ENCODE measurements at regions of chr5 and their contacts with region 1.

Region 1: GRCh38 chr5:168219515-168220410 is 71.7 kb upstream of the WWC1 start:
- DNase-seq: peak; percentile 51
- H3K4me3 ChIP-seq: no peak overlapping the region
- H3K27ac ChIP-seq: no peak overlapping the region
- H3K4me1 ChIP-seq: peaks cover 0 to 11% (median 1%) of the 10 kb centered on the region in 4 donors
- H3K27me3 ChIP-seq: peaks cover 7% of the 10 kb centered on the region
- CTCF ChIP-seq: peak; percentile 85 to 95 (median 87)
- EP300 ChIP-seq: no peak
- POLR2A ChIP-seq: no peak

Region 2: GRCh38 chr5:167723254-167723871 is 496.4 kb before region 1 on chr5:
- in situ Hi-C with region 1: loop called (anchors 10 to 25 kb)
- intact Hi-C with region 1: loop called (anchors 10 kb)
- DNase-seq: peak; percentile 68
- H3K4me3 ChIP-seq: no peak overlapping the region
- H3K27ac ChIP-seq: no peak overlapping the region
- H3K4me1 ChIP-seq: no peaks in the 10 kb centered on the region
- H3K27me3 ChIP-seq: no peaks in the 10 kb centered on the region
- CTCF ChIP-seq: peak; percentile 81 to 93 (median 90)
- EP300 ChIP-seq: no peak
- POLR2A ChIP-seq: no peak

Region 3: DNA sequence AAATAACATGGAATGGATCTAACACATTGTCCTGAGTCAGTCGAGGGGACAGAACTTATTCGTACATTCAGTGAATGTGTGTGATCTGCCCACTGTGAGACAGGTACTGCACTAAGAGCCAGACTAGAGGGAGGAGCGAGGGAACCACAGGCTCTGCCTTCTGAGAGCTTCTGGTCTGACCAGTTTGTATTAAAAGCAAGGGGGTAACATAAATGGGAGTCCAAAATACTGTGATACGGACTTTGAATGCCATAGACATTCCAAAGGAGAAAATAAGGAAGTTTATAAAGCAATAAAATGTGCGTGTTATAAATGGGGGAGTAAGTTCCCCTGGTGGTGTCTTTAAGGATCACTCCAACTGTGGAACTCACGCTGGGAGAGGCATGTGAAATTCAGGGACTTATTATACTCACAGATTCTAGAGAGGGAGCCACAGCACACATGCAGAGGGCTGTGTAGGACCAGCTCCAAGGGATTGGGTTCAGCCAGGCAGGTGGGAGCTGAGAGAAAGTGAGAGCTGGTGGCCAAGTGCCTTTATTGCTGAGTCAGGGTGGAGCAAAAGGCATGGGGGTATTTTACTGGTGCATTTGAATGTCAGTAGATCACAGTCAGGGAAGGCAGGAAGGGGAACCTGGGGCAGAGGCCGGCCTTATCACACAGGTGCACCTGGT is 114.8 kb before region 1 on chr5:
- in situ Hi-C with region 1: loop called in 2 of 4 experiments (anchors 10 kb)
- intact Hi-C with region 1: no loop called
- DNase-seq: peak; percentile 60
- H3K4me3 ChIP-seq: peak overlapping the region in 1 of 4 donors; percentile 10
- H3K27ac ChIP-seq: peak overlapping the region; percentile 70 to 77 (median 75)
- H3K4me1 ChIP-seq: peaks cover 0 to 23% (median 19%) of the 10 kb centered on the region in 4 donors
- H3K27me3 ChIP-seq: no peaks in the 10 kb centered on the region
- CTCF ChIP-seq: peak; percentile 25 to 84 (median 47)
- EP300 ChIP-seq: no peak
- POLR2A ChIP-seq: peak; percentile 5

Region 4: GRCh38 chr5:168114444-168115017 is 105.2 kb before region 1 on chr5:
- in situ Hi-C with region 1: loop called in 2 of 4 experiments (anchors 10 kb)
- intact Hi-C with region 1: no loop called
- DNase-seq: peak; percentile 82
- H3K4me3 ChIP-seq: no peak overlapping the region
- H3K27ac ChIP-seq: no peak overlapping the region
- H3K4me1 ChIP-seq: no peaks in the 10 kb centered on the region
- H3K27me3 ChIP-seq: no peaks in the 10 kb centered on the region
- CTCF ChIP-seq: peak; percentile 50 to 80 (median 72)
- EP300 ChIP-seq: no peak
- POLR2A ChIP-seq: no peak

Region 5: GRCh38 chr5:168123631-168124528 is 95.9 kb before region 1 on chr5:
- in situ Hi-C with region 1: loop called in 2 of 4 experiments (anchors 10 kb)
- intact Hi-C with region 1: no loop called
- DNase-seq: no peak
- H3K4me3 ChIP-seq: no peak overlapping the region
- H3K27ac ChIP-seq: no peak overlapping the region
- H3K4me1 ChIP-seq: no peaks in the 10 kb centered on the region
- H3K27me3 ChIP-seq: no peaks in the 10 kb centered on the region
- CTCF ChIP-seq: no peak
- EP300 ChIP-seq: no peak
- POLR2A ChIP-seq: no peak

Region 6: GRCh38 chr5:168234133-168234532 is 14.4 kb after region 1 on chr5:
- in situ Hi-C with region 1: no loop called
- intact Hi-C with region 1: no loop called
- DNase-seq: no peak
- H3K4me3 ChIP-seq: no peak overlapping the region
- H3K27ac ChIP-seq: no peak overlapping the region
- H3K4me1 ChIP-seq: no peaks in the 10 kb centered on the region
- H3K27me3 ChIP-seq: no peaks in the 10 kb centered on the region
- CTCF ChIP-seq: no peak
- EP300 ChIP-seq: no peak
- POLR2A ChIP-seq: no peak

Measured in transverse colon (tissue), 4 donors.